Panc1 (cell line): ENCODE measurements at regions of chr5 and their contacts with region 1.

Region 1: DNA sequence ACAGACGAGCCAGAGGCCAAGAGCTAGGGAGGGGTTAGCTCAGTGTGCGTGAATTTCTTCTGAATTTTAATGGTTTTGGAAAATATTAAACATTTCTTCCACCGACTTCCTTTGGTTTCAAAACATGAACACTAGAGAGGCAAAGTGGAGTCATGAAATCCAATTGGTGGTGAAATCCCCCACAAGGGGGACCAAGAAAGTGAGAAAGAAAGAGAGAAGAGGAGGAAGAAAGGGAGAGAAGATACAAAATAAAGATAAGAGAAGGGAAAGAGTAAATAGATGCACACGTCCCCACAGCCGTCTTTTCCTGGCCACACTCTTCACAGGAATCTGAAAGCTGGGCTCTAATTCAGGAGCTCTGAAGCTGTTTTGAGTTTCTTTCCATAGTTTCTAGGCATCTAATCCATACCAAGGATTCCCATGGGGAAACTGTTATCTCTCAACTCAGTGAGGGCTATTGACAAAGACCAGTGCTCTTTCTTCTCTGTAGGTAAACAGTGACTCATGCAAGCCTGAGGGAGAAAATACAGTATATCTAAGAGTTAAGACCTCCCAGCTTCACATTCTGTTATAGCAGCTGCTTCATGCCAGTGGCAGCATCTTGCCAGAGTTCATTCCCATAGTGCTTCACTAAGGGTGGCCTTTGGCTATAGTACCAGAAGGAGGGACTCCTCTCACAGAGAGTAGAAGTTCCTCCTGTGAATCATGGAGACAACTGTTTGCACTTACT is 115.8 kb upstream of the LIFR start:
- DNase-seq: no peak
- ATAC-seq: peak; percentile 86
- H3K4me3 ChIP-seq: no peak overlapping the region
- H3K27ac ChIP-seq: peak overlapping the region; percentile 71; the same call in 1 of the 2 replicates
- H3K4me1 ChIP-seq: peaks cover 24% of the 10 kb centered on the region
- H3K27me3 ChIP-seq: no peaks in the 10 kb centered on the region
- CTCF ChIP-seq: no peak

Region 2: GRCh38 chr5:38655691-38656090 is 16.5 kb before region 1 on chr5:
- CTCF ChIA-PET with region 1: interaction called, 4 read pairs
- POLR2A ChIA-PET with region 1: interaction called, 31 read pairs
- in situ Hi-C with region 1: no loop called
- intact Hi-C with region 1: no loop called
- DNase-seq: no peak
- ATAC-seq: no peak
- H3K4me3 ChIP-seq: no peak overlapping the region
- H3K27ac ChIP-seq: no peak overlapping the region
- H3K4me1 ChIP-seq: peaks cover 4% of the 10 kb centered on the region; the same call in 1 of the 2 replicates
- H3K27me3 ChIP-seq: no peaks in the 10 kb centered on the region
- CTCF ChIP-seq: no peak

Region 3: GRCh38 chr5:39765366-39765765 is 1093.1 kb after region 1 on chr5:
- CTCF ChIA-PET with region 1: no interaction called
- POLR2A ChIA-PET with region 1: no interaction called
- in situ Hi-C with region 1: no loop called
- intact Hi-C with region 1: no loop called
- DNase-seq: no peak
- ATAC-seq: no peak
- H3K4me3 ChIP-seq: no peak overlapping the region
- H3K27ac ChIP-seq: no peak overlapping the region
- H3K4me1 ChIP-seq: no peaks in the 10 kb centered on the region
- H3K27me3 ChIP-seq: no peaks in the 10 kb centered on the region
- CTCF ChIP-seq: no peak